Activated CD8-positive, alpha-beta T cell treated with anti-CD3 and anti-CD28 coated beads, Interleukin-2, amount 10 ng/mL, durations not matched to agents 7 days and 5 days (primary cell): ENCODE measurements at regions of chr19 and their contacts with region 1.

Region 1: GRCh38 chr19:2475702-2476450 is at the start of gene GADD45B:
- DNase-seq: peak; percentile 98
- ATAC-seq: peak; percentile 52
- H3K4me3 Mint-ChIP-seq: peak within 1 kb of the TSS; percentile 86
- H3K27ac Mint-ChIP-seq: peak within 1 kb of the TSS; percentile 95
- H3K4me1 Mint-ChIP-seq: peaks cover 23% of the 10 kb centered on the region
- H3K27me3 Mint-ChIP-seq: peaks cover 2% of the 10 kb centered on the region
- total RNA-seq, gene GADD45B: 59.2 to 61.4 TPM

Region 2: DNA sequence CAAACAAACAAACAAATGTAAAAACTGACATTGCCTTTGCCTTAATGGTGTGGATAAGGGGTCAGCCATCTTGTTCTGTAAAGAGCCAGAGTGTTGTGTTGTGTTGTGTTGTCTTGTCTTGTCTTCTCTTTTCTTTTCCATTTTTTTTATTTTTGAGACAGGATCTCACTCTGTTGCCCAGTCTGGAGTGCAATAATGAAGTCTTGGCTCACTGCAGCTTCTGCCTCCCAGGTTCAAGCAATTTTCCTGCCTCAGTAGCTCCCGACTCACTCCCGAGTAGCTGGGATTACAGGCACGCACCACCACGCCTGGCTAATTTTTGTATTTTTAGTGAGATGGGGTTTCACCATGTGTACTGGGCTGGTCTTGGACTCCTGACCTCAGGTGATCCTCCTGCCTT is 76.3 kb before region 1 on chr19:
- CTCF ChIA-PET with region 1: no interaction called
- POLR2A ChIA-PET with region 1: no interaction called
- DNase-seq: no peak
- ATAC-seq: no peak
- H3K4me3 Mint-ChIP-seq: no peak overlapping the region
- H3K27ac Mint-ChIP-seq: no peak overlapping the region
- H3K4me1 Mint-ChIP-seq: peaks cover 6% of the 10 kb centered on the region
- H3K27me3 Mint-ChIP-seq: no peaks in the 10 kb centered on the region

Region 3: GRCh38 chr19:2438178-2438864 is 37.6 kb before region 1 on chr19:
- CTCF ChIA-PET with region 1: no interaction called
- POLR2A ChIA-PET with region 1: no interaction called
- DNase-seq: no peak
- ATAC-seq: no peak
- H3K4me3 Mint-ChIP-seq: no peak overlapping the region
- H3K27ac Mint-ChIP-seq: no peak overlapping the region
- H3K4me1 Mint-ChIP-seq: no peaks in the 10 kb centered on the region
- H3K27me3 Mint-ChIP-seq: no peaks in the 10 kb centered on the region

Region 4: GRCh38 chr19:2494444-2495129 is 18.7 kb after region 1 on chr19:
- CTCF ChIA-PET with region 1: interaction called, 8 read pairs
- POLR2A ChIA-PET with region 1: interaction called, 25 read pairs
- DNase-seq: peak; percentile 64
- ATAC-seq: peak; percentile 82
- H3K4me3 Mint-ChIP-seq: peak overlapping the region; percentile 73
- H3K27ac Mint-ChIP-seq: peak overlapping the region; percentile 39
- H3K4me1 Mint-ChIP-seq: peaks cover 48% of the 10 kb centered on the region
- H3K27me3 Mint-ChIP-seq: peaks cover 19% of the 10 kb centered on the region

Region 5: GRCh38 chr19:2543463-2544442 is 67.9 kb after region 1 on chr19:
- CTCF ChIA-PET with region 1: interaction called, 8 read pairs
- POLR2A ChIA-PET with region 1: interaction called, 45 read pairs
- DNase-seq: peak; percentile 78
- ATAC-seq: peak; percentile 86
- H3K4me3 Mint-ChIP-seq: peak overlapping the region; percentile 73
- H3K27ac Mint-ChIP-seq: peak overlapping the region; percentile 90
- H3K4me1 Mint-ChIP-seq: peaks cover 39% of the 10 kb centered on the region
- H3K27me3 Mint-ChIP-seq: no peaks in the 10 kb centered on the region

Region 6: GRCh38 chr19:2578901-2579677 is 103.2 kb after region 1 on chr19:
- CTCF ChIA-PET with region 1: interaction called, 27 read pairs
- POLR2A ChIA-PET with region 1: interaction called, 62 read pairs
- DNase-seq: peak; percentile 80
- ATAC-seq: peak; percentile 79
- H3K4me3 Mint-ChIP-seq: peak overlapping the region; percentile 50
- H3K27ac Mint-ChIP-seq: no peak overlapping the region
- H3K4me1 Mint-ChIP-seq: peaks cover 12% of the 10 kb centered on the region
- H3K27me3 Mint-ChIP-seq: peaks cover 4% of the 10 kb centered on the region

Region 7: DNA sequence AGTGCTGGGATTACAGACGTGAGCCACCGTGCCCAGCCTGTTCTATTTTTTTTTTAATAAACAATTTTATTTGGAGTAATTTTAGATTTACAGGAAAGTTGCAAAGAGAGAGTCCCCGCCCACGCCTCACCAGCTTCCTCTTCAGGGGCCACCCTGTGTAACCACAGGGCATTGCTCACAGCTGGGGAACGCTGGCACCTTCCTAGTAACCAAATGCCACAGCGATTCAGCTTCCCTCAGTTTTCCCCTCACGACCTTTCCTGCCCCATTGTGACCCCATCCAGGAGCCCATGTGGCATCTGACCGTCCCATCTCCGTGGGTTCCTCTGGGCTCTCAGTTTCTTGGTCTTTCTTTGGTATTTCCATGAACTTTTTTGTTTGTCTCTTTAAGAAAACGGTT is 142.7 kb after region 1 on chr19:
- CTCF ChIA-PET with region 1: interaction called, 162 read pairs
- POLR2A ChIA-PET with region 1: interaction called, 143 read pairs
- DNase-seq: peak; percentile 64
- ATAC-seq: no peak
- H3K4me3 Mint-ChIP-seq: peak overlapping the region; percentile 12
- H3K27ac Mint-ChIP-seq: peak overlapping the region; percentile 95
- H3K4me1 Mint-ChIP-seq: peaks cover 73% of the 10 kb centered on the region
- H3K27me3 Mint-ChIP-seq: no peaks in the 10 kb centered on the region

Region 8: GRCh38 chr19:2798733-2799132 is 322.9 kb after region 1 on chr19:
- CTCF ChIA-PET with region 1: no interaction called
- POLR2A ChIA-PET with region 1: no interaction called
- DNase-seq: no peak
- ATAC-seq: no peak
- H3K4me3 Mint-ChIP-seq: no peak overlapping the region
- H3K27ac Mint-ChIP-seq: no peak overlapping the region
- H3K4me1 Mint-ChIP-seq: no peaks in the 10 kb centered on the region
- H3K27me3 Mint-ChIP-seq: no peaks in the 10 kb centered on the region